ENCODE measurements at regions of chr22 and their contacts with region 1.

Region 1: GRCh38 chr22:30386960-30387827 is at the start of gene RNF215:
- DNase-seq: peak; percentile 59
- H3K4me3 ChIP-seq: peak within 1 kb of the TSS; percentile 46 to 79 (median 61)
- H3K27ac ChIP-seq: no peak within 1 kb of the TSS
- H3K4me1 ChIP-seq: peaks cover 11% of the 10 kb centered on the region
- H3K27me3 ChIP-seq: no peaks in the 10 kb centered on the region
- CTCF ChIP-seq: peak; percentile 42 to 83
- total RNA-seq, gene RNF215: 21.6 to 22.0 TPM

Region 2: GRCh38 chr22:30116362-30117117 is 270.7 kb before region 1 on chr22:
- CTCF ChIA-PET with region 1: no interaction called
- dilution Hi-C with region 1: no loop called
- in situ Hi-C with region 1: loop called in 1 of 2 experiments (anchors 25 kb)
- intact Hi-C with region 1: no loop called
- DNase-seq: peak; percentile 76
- H3K4me3 ChIP-seq: no peak overlapping the region
- H3K27ac ChIP-seq: peak overlapping the region; percentile 58
- H3K4me1 ChIP-seq: peaks cover 16% of the 10 kb centered on the region
- H3K27me3 ChIP-seq: no peaks in the 10 kb centered on the region
- CTCF ChIP-seq: no peak

Region 3: GRCh38 chr22:30262917-30263741 is 124.1 kb before region 1 on chr22:
- CTCF ChIA-PET with region 1: no interaction called
- dilution Hi-C with region 1: no loop called
- in situ Hi-C with region 1: loop called in 1 of 2 experiments (anchors 5 kb)
- intact Hi-C with region 1: loop called (anchors 1 kb)
- DNase-seq: no peak
- H3K4me3 ChIP-seq: no peak overlapping the region
- H3K27ac ChIP-seq: peak overlapping the region; percentile 62
- H3K4me1 ChIP-seq: peaks cover 15% of the 10 kb centered on the region
- H3K27me3 ChIP-seq: no peaks in the 10 kb centered on the region
- CTCF ChIP-seq: peak; percentile 90 to 96

Region 4: DNA sequence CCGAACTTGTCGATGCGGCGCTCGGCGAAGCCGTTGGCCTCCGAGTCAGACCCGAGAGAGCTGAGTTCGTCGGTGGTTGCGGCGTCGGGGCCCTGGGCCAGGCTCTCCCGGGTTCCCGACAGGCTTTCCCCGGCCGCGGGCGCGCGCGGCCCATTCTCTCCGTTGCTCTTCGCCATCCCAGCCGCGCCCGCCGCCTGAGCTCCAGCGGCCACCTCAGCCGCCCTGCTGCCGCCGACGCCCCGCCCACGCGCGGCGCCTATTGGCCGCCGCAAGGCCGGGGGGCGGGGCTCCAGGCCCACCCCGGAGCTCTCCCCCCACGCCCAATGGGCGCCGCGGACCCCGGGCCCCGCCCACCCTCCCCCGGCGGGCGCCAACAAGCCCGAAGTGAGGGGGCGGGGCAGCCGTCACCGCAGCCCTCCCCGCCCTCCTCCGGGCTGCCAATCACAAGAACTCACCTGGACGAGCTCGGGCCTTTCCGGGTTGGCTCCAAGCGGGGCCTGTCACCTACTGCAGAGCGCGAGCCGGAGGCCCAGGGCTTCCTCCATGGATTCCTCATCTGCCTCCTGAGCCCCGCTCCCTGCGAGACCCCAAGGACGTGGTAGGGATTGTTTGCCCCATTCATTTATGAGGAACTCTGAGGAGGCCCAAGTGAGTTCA is 60.4 kb before region 1 on chr22 and contains the start of gene TBC1D10A:
- CTCF ChIA-PET with region 1: interaction called, 6 read pairs
- dilution Hi-C with region 1: no loop called
- in situ Hi-C with region 1: no loop called
- intact Hi-C with region 1: loop called (anchors 2 kb)
- DNase-seq: peak; percentile 93
- H3K4me3 ChIP-seq: peak within 1 kb of the TSS; percentile 86 to 95 (median 89)
- H3K27ac ChIP-seq: peak within 1 kb of the TSS; percentile 67
- H3K4me1 ChIP-seq: peaks cover 31% of the 10 kb centered on the region
- H3K27me3 ChIP-seq: no peaks in the 10 kb centered on the region
- CTCF ChIP-seq: no peak
- total RNA-seq, gene TBC1D10A: 25.7 to 27.5 TPM

Region 5: GRCh38 chr22:30423982-30424963 is 37.1 kb after region 1 on chr22:
- CTCF ChIA-PET with region 1: interaction called, 10 read pairs
- dilution Hi-C with region 1: loop called (anchors 5 kb)
- in situ Hi-C with region 1: loop called in 1 of 2 experiments (anchors 5 kb)
- intact Hi-C with region 1: loop called (anchors 1 kb)
- DNase-seq: peak; percentile 98
- H3K4me3 ChIP-seq: peak overlapping the region in 2 of 3 experiments; percentile 26 to 37
- H3K27ac ChIP-seq: peak overlapping the region; percentile 94
- H3K4me1 ChIP-seq: peaks cover 76% of the 10 kb centered on the region
- H3K27me3 ChIP-seq: no peaks in the 10 kb centered on the region
- CTCF ChIP-seq: no peak

Region 6: GRCh38 chr22:30474683-30475424 is 87.7 kb after region 1 on chr22:
- CTCF ChIA-PET with region 1: no interaction called
- dilution Hi-C with region 1: no loop called
- in situ Hi-C with region 1: loop called in 1 of 2 experiments (anchors 10 kb)
- intact Hi-C with region 1: no loop called
- DNase-seq: peak; percentile 25
- H3K4me3 ChIP-seq: no peak overlapping the region
- H3K27ac ChIP-seq: no peak overlapping the region
- H3K4me1 ChIP-seq: peaks cover 8% of the 10 kb centered on the region
- H3K27me3 ChIP-seq: no peaks in the 10 kb centered on the region
- CTCF ChIP-seq: no peak

Region 7: GRCh38 chr22:30574997-30575671 is 187.9 kb after region 1 on chr22:
- CTCF ChIA-PET with region 1: no interaction called
- dilution Hi-C with region 1: no loop called
- in situ Hi-C with region 1: no loop called
- intact Hi-C with region 1: no loop called
- DNase-seq: no peak
- H3K4me3 ChIP-seq: no peak overlapping the region
- H3K27ac ChIP-seq: no peak overlapping the region
- H3K4me1 ChIP-seq: no peaks in the 10 kb centered on the region
- H3K27me3 ChIP-seq: no peaks in the 10 kb centered on the region
- CTCF ChIP-seq: no peak

Region 8: GRCh38 chr22:30606455-30607299 is 219.5 kb after region 1 on chr22 and contains the start of gene TCN2:
- CTCF ChIA-PET with region 1: no interaction called
- dilution Hi-C with region 1: no loop called
- in situ Hi-C with region 1: no loop called
- intact Hi-C with region 1: loop called (anchors 1 kb)
- DNase-seq: peak; percentile 64
- H3K4me3 ChIP-seq: peak within 1 kb of the TSS; percentile 27 to 48 (median 45)
- H3K27ac ChIP-seq: no peak within 1 kb of the TSS
- H3K4me1 ChIP-seq: peaks cover 16% of the 10 kb centered on the region
- H3K27me3 ChIP-seq: no peaks in the 10 kb centered on the region
- CTCF ChIP-seq: no peak
- total RNA-seq, gene TCN2: 3.6 to 9.3 TPM